Activated CD4-positive, alpha-beta memory T cell treated with anti-CD3 and anti-CD28 coated beads for 36 hours (primary cell): ENCODE measurements at regions of chr12 and their contacts with region 1.

Region 1: DNA sequence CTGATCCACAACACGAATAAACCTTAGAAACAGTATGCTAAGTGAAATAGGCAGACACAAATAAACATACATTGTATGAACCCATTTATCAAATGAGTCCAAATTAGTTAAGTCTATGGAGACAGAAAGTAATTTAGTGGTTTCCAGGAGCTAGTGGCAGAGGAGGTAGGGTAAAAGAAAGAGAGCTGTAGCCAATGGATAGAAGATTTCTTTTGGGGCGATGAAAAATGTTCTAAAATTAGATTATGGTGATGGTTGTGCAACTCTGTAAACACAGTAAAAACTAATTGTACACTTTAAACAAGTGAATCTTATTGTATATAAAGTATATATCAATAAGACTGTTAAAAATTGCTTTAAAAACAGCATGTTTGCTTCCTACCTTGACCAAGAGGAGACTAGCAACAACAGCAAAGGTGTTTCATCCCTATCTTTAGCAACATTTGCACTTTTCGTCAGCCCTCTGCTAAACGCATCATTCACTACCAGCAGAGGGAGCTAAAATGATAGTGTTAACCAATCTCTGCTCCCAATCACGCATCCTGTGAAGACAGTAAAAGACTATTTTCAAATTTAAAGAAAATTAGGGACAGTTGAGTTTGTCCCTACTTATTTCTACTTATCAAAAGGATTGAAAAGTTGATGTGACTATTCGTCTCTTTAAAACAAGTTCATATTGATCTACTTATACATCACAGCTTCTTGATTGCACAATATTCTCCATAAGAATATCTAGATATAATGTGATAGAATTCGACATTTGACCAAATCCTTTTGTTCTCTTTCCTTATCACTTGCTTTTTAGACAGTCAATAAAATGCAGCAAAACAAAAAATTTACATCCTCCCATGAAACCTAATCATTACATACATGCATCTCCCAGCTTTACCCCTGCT is 24.0 kb upstream of the LGR5 start:
- DNase-seq: peak; percentile 16
- H3K4me3 Mint-ChIP-seq: no peak overlapping the region
- H3K27ac Mint-ChIP-seq: no peak overlapping the region
- H3K4me1 Mint-ChIP-seq: no peaks in the 10 kb centered on the region
- H3K27me3 Mint-ChIP-seq: no peaks in the 10 kb centered on the region

Region 2: GRCh38 chr12:71456316-71456715 is 40.7 kb after region 1 on chr12:
- CTCF ChIA-PET with region 1: no interaction called
- POLR2A ChIA-PET with region 1: no interaction called
- intact Hi-C with region 1: no loop called
- DNase-seq: no peak
- H3K4me3 Mint-ChIP-seq: no peak overlapping the region
- H3K27ac Mint-ChIP-seq: no peak overlapping the region
- H3K4me1 Mint-ChIP-seq: no peaks in the 10 kb centered on the region
- H3K27me3 Mint-ChIP-seq: peaks cover 18% of the 10 kb centered on the region

Region 3: GRCh38 chr12:71524626-71525025 is 109.0 kb after region 1 on chr12:
- CTCF ChIA-PET with region 1: no interaction called
- POLR2A ChIA-PET with region 1: no interaction called
- intact Hi-C with region 1: no loop called
- DNase-seq: no peak
- H3K4me3 Mint-ChIP-seq: no peak overlapping the region
- H3K27ac Mint-ChIP-seq: no peak overlapping the region
- H3K4me1 Mint-ChIP-seq: no peaks in the 10 kb centered on the region
- H3K27me3 Mint-ChIP-seq: peaks cover 4% of the 10 kb centered on the region

Region 4: GRCh38 chr12:71551529-71551928 is 135.9 kb after region 1 on chr12:
- CTCF ChIA-PET with region 1: interaction called, 3 read pairs
- POLR2A ChIA-PET with region 1: no interaction called
- intact Hi-C with region 1: loop called (anchors 1 kb)
- DNase-seq: no peak
- H3K4me3 Mint-ChIP-seq: no peak overlapping the region
- H3K27ac Mint-ChIP-seq: no peak overlapping the region
- H3K4me1 Mint-ChIP-seq: no peaks in the 10 kb centered on the region
- H3K27me3 Mint-ChIP-seq: no peaks in the 10 kb centered on the region